Activated CD8-positive, alpha-beta memory T cell treated with anti-CD3 and anti-CD28 coated beads, Interleukin-2, amount 10 ng/mL, durations not matched to agents 7 days and 5 days (primary cell): ENCODE measurements at regions of chr15 and their contacts with region 1.

Region 1: GRCh38 chr15:89206908-89207331 is 14.5 kb downstream of the RLBP1 start:
- DNase-seq: peak; percentile 76
- ATAC-seq: peak; percentile 73
- H3K4me3 Mint-ChIP-seq: no peak overlapping the region
- H3K27ac Mint-ChIP-seq: no peak overlapping the region
- H3K4me1 Mint-ChIP-seq: peaks cover 36% of the 10 kb centered on the region
- H3K27me3 Mint-ChIP-seq: peaks cover 7% of the 10 kb centered on the region

Region 2: GRCh38 chr15:88393719-88394519 is 813.0 kb before region 1 on chr15:
- CTCF ChIA-PET with region 1: no interaction called
- DNase-seq: no peak
- ATAC-seq: no peak
- H3K4me3 Mint-ChIP-seq: no peak overlapping the region
- H3K27ac Mint-ChIP-seq: no peak overlapping the region
- H3K4me1 Mint-ChIP-seq: no peaks in the 10 kb centered on the region
- H3K27me3 Mint-ChIP-seq: peaks cover 19% of the 10 kb centered on the region

Region 3: DNA sequence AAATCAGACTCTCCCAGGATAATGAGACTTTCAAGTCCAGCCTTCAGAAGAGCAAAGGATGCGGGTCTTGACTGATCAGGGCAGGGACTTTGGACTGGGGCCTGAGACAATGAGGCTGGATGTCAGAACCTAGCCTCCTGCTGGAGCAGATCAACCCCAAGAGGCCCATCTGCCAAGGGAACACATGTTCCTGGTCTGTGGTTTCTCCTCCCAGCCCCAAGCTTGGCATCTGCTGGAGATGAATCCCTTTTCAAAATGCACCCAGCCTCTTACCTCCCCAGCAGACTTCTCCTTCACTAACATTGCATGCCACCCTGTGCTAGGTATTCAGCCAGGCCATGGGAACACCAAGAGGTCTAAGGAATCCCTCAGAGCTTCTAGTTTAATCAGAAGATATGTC is 250.0 kb before region 1 on chr15:
- CTCF ChIA-PET with region 1: no interaction called
- DNase-seq: no peak
- ATAC-seq: no peak
- H3K4me3 Mint-ChIP-seq: no peak overlapping the region
- H3K27ac Mint-ChIP-seq: no peak overlapping the region
- H3K4me1 Mint-ChIP-seq: no peaks in the 10 kb centered on the region
- H3K27me3 Mint-ChIP-seq: peaks cover 23% of the 10 kb centered on the region

Region 4: GRCh38 chr15:89101302-89102191 is 105.4 kb before region 1 on chr15:
- CTCF ChIA-PET with region 1: no interaction called
- DNase-seq: no peak
- ATAC-seq: no peak
- H3K4me3 Mint-ChIP-seq: no peak overlapping the region
- H3K27ac Mint-ChIP-seq: no peak overlapping the region
- H3K4me1 Mint-ChIP-seq: peaks cover 6% of the 10 kb centered on the region
- H3K27me3 Mint-ChIP-seq: no peaks in the 10 kb centered on the region

Region 5: GRCh38 chr15:89171136-89172072 is 35.5 kb before region 1 on chr15:
- CTCF ChIA-PET with region 1: interaction called, 27 read pairs
- DNase-seq: peak; percentile 47
- ATAC-seq: no peak
- H3K4me3 Mint-ChIP-seq: no peak overlapping the region
- H3K27ac Mint-ChIP-seq: no peak overlapping the region
- H3K4me1 Mint-ChIP-seq: peaks cover 18% of the 10 kb centered on the region
- H3K27me3 Mint-ChIP-seq: no peaks in the 10 kb centered on the region

Region 6: GRCh38 chr15:89230277-89230676 is 23.4 kb after region 1 on chr15:
- CTCF ChIA-PET with region 1: interaction called, 16 read pairs
- DNase-seq: no peak
- ATAC-seq: no peak
- H3K4me3 Mint-ChIP-seq: no peak overlapping the region
- H3K27ac Mint-ChIP-seq: no peak overlapping the region
- H3K4me1 Mint-ChIP-seq: peaks cover 10% of the 10 kb centered on the region
- H3K27me3 Mint-ChIP-seq: peaks cover 32% of the 10 kb centered on the region

Region 7: GRCh38 chr15:89291934-89292438 is 85.1 kb after region 1 on chr15:
- CTCF ChIA-PET with region 1: interaction called, 16 read pairs
- DNase-seq: no peak
- ATAC-seq: no peak
- H3K4me3 Mint-ChIP-seq: no peak overlapping the region
- H3K27ac Mint-ChIP-seq: no peak overlapping the region
- H3K4me1 Mint-ChIP-seq: peaks cover 3% of the 10 kb centered on the region
- H3K27me3 Mint-ChIP-seq: no peaks in the 10 kb centered on the region

Region 8: DNA sequence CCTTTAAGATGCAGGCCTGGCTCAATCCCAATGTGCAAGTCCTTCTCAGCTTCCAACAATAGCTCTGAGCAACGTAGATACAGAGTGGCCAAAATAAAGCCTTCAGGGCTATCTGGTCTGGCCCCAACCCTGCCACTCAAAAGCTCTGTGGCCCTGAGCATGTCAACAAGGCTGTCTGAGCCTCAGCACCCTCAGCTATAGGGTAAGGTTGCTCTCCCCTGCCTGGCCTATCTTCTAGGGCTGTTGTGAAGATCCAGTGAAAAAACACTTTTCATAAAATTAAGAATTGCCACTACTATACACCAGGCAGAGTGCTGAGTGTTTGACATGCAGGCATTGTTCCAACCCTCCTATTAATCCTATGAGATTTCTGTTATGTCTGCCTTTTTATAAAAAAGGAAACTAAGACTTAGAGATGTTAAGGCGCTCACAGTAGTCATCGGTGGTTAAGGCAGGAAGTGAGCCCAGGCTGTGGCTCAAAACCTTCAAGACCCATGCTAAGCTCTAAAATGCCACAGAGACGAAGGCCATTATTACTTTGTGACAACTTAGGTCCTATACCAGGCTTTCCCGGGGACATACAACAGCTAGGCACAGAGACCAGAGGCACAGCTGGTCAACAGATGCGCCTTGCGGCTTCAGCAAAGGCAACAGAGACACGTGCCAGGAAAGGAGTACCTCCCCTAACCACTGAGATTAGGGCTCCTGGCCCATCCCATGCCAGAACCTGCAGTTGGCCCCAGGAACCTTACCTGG is 122.6 kb after region 1 on chr15:
- CTCF ChIA-PET with region 1: interaction called, 18 read pairs
- DNase-seq: peak; percentile 85
- ATAC-seq: peak; percentile 54
- H3K4me3 Mint-ChIP-seq: peak overlapping the region; percentile 65
- H3K27ac Mint-ChIP-seq: peak overlapping the region; percentile 88
- H3K4me1 Mint-ChIP-seq: peaks cover 58% of the 10 kb centered on the region
- H3K27me3 Mint-ChIP-seq: no peaks in the 10 kb centered on the region